CD14-positive monocyte (primary cell): ENCODE measurements at regions of chr22 and their contacts with region 1.

Region 1: DNA sequence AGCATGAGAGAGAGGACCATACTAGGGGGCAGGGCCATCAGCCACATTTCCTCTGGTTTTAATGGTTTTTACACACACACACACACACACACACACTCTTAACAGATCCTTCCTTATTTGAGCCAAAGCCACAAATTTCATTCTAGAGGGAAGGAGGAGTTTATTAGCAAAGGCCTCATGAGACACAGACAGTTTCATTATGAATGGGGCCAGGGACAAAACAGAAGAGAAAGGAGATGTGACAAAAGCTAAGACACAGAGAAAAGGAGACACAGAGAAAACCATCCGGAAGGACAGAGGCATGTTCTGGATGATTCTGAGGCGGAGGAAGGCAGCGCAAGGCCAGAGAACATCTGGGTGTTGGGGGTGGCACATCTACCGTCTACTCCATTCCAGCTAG is 32.2 kb upstream of the ARFGAP3 start:
- DNase-seq: peak; percentile 83 to 88 (median 84)
- H3K4me3 ChIP-seq: peak overlapping the region in 2 of 3 experiments; percentile 23 to 72
- H3K4me3 Mint-ChIP-seq: peak overlapping the region; percentile 79 to 94
- H3K27ac ChIP-seq: peak overlapping the region; percentile 81 to 98
- H3K27ac Mint-ChIP-seq: peak overlapping the region; percentile 96 to 100 (median 100)
- H3K4me1 ChIP-seq: peaks cover 63 to 64% of the 10 kb centered on the region in 2 donors
- H3K4me1 Mint-ChIP-seq: peaks cover 67% of the 10 kb centered on the region
- H3K27me3 ChIP-seq: no peaks in the 10 kb centered on the region
- H3K27me3 Mint-ChIP-seq: peaks cover 0 to 2% (median 0%) of the 10 kb centered on the region in 3 donors
- CTCF ChIP-seq: no peak

Region 2: GRCh38 chr22:42553475-42554361 is 335.6 kb before region 1 on chr22 and contains the start of gene SERHL2:
- intact Hi-C with region 1: no loop called
- DNase-seq: peak; percentile 60 to 73 (median 71)
- H3K4me3 ChIP-seq: peak within 1 kb of the TSS; percentile 21 to 72 (median 47)
- H3K4me3 Mint-ChIP-seq: peak within 1 kb of the TSS; percentile 85 to 89
- H3K27ac ChIP-seq: no peak within 1 kb of the TSS
- H3K27ac Mint-ChIP-seq: peak within 1 kb of the TSS in 2 of 7 donors; percentile 46 to 65
- H3K4me1 ChIP-seq: peaks cover 12 to 13% of the 10 kb centered on the region in 2 donors
- H3K4me1 Mint-ChIP-seq: peaks cover 21% of the 10 kb centered on the region
- H3K27me3 ChIP-seq: peaks cover 2 to 19% of the 10 kb centered on the region in 2 donors
- H3K27me3 Mint-ChIP-seq: peaks cover 18 to 29% (median 28%) of the 10 kb centered on the region in 3 donors
- CTCF ChIP-seq: no peak
- polyA plus RNA-seq, gene SERHL2: 0.20 to 0.60 (median 0.24) TPM

Region 3: DNA sequence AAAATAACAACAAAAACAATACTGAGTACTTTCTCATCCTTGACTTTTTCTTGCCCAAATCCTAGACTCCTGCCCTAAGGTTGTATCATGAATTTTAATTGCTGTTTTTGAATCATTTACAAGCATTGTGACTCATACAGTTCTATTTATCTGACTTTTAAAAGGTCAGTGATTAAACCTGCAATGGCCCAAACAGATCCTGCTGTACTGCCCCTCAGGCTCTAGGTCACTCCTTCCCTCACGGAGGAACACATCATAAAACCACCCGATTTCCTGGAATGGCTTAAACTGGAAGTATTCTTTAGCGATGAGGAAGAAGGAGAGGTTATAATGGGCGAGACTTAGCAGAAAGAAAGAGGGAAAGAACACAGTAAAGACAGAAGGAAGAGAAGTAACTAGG is 44.5 kb before region 1 on chr22:
- intact Hi-C with region 1: no loop called
- DNase-seq: no peak
- H3K4me3 ChIP-seq: no peak overlapping the region
- H3K4me3 Mint-ChIP-seq: no peak overlapping the region
- H3K27ac ChIP-seq: no peak overlapping the region
- H3K27ac Mint-ChIP-seq: no peak overlapping the region
- H3K4me1 ChIP-seq: no peaks in the 10 kb centered on the region
- H3K4me1 Mint-ChIP-seq: no peaks in the 10 kb centered on the region
- H3K27me3 ChIP-seq: no peaks in the 10 kb centered on the region
- H3K27me3 Mint-ChIP-seq: no peaks in the 10 kb centered on the region
- CTCF ChIP-seq: no peak

Region 4: DNA sequence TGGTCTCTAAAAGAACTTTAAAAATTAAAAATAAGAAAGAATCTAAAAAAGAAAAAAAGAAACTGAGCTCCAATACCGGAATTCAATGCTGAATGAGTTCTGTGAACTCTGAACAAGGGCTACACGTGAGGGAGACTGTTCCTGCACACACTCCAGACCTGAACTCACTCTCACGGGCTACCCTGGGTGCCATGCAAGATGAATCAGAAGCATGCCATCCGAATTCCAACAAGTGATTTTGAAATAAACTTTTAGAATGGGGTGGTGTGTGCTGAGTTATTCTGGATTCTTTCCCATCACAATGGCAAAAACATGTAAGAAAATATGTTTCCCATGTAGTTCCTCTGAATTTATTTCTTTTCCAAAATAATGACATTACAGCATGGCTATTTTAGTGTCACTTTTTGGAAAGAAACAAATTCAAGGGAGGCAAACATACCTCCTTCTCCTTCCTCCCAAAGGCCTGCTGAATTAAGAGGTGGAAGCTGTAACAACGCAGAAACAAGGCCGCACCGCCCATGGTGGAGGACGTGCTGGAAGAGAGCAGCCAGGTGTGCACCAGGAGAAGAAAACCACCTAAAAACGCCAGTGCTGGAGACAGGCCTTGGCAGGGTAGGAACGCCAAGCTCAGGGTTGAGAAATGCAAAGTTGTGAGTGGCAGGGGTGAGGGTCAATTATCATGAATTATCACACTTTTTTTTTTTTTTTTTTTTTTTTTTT is 31.0 kb after region 1 on chr22:
- intact Hi-C with region 1: loop called in 1 of 2 experiments (anchors 5 kb)
- DNase-seq: no peak
- H3K4me3 ChIP-seq: no peak overlapping the region
- H3K4me3 Mint-ChIP-seq: no peak overlapping the region
- H3K27ac ChIP-seq: no peak overlapping the region
- H3K27ac Mint-ChIP-seq: peak overlapping the region in 3 of 7 donors; percentile 43 to 79 (median 50)
- H3K4me1 ChIP-seq: peaks cover 48 to 64% of the 10 kb centered on the region in 2 donors
- H3K4me1 Mint-ChIP-seq: peaks cover 65% of the 10 kb centered on the region
- H3K27me3 ChIP-seq: no peaks in the 10 kb centered on the region
- H3K27me3 Mint-ChIP-seq: peaks cover 0 to 3% (median 0%) of the 10 kb centered on the region in 3 donors
- CTCF ChIP-seq: no peak

Region 5: GRCh38 chr22:43263645-43264514 is 374.6 kb after region 1 on chr22:
- intact Hi-C with region 1: no loop called
- DNase-seq: peak; percentile 85 to 97 (median 86)
- H3K4me3 ChIP-seq: peak overlapping the region in 1 of 3 experiments; percentile 29
- H3K4me3 Mint-ChIP-seq: peak overlapping the region; percentile 64 to 84
- H3K27ac ChIP-seq: peak overlapping the region in 1 of 2 donors; percentile 48
- H3K27ac Mint-ChIP-seq: peak overlapping the region in 6 of 7 donors; percentile 36 to 83 (median 72)
- H3K4me1 ChIP-seq: peaks cover 18 to 21% of the 10 kb centered on the region in 2 donors
- H3K4me1 Mint-ChIP-seq: peaks cover 20% of the 10 kb centered on the region
- H3K27me3 ChIP-seq: peaks cover 0 to 18% of the 10 kb centered on the region in 2 donors
- H3K27me3 Mint-ChIP-seq: peaks cover 15 to 29% (median 23%) of the 10 kb centered on the region in 3 donors
- CTCF ChIP-seq: no peak

Region 6: GRCh38 chr22:43435851-43436811 is 546.8 kb after region 1 on chr22:
- intact Hi-C with region 1: no loop called
- DNase-seq: no peak
- H3K4me3 ChIP-seq: no peak overlapping the region
- H3K4me3 Mint-ChIP-seq: no peak overlapping the region
- H3K27ac ChIP-seq: no peak overlapping the region
- H3K27ac Mint-ChIP-seq: no peak overlapping the region
- H3K4me1 ChIP-seq: no peaks in the 10 kb centered on the region
- H3K4me1 Mint-ChIP-seq: no peaks in the 10 kb centered on the region
- H3K27me3 ChIP-seq: peaks cover 0 to 5% of the 10 kb centered on the region in 2 donors
- H3K27me3 Mint-ChIP-seq: peaks cover 15 to 19% (median 18%) of the 10 kb centered on the region in 3 donors
- CTCF ChIP-seq: no peak